ENCODE measurements at regions of chr4 and their contacts with region 1.

Region 1: DNA sequence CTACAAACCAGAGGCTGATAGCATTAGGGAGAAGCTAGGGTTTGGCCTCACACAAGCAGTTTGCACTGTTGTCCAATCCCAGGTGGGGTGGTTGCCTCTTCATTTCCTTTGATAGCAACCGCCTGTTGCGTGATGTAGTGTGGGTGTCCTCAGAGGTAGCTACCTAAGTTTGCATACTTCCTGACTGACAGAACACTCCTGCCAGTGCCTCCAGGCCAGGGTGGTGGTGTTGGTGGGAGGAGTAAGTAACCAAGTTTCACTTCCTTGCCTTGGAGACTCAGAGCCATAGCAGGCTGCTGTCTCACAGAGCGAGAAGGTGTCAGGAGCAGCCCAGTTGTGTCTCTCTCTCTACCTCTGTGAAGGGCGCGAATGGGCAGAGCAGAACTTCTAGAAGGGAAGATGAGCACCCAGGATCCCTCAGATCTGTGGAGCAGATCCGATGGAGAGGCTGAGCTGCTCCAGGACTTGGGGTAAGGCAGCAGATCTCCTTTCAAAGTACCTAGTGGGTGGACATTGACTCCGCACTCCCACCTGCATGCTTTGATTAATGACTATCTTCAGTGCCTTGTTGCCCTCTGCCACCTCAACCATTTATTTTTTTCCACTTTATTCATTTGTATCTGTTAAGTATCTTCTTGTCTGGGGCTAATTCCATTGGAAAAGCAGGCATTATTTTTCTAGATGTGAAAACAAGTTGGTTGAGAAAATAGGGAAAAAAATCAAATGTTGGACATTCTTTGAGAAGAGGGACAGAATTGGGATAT is at the start of gene DAPP1:
- DNase-seq: peak; percentile 96
- H3K4me3 ChIP-seq: peak within 1 kb of the TSS; percentile 80
- H3K27ac ChIP-seq: peak within 1 kb of the TSS; percentile 95
- H3K4me1 ChIP-seq: peaks cover 65% of the 10 kb centered on the region
- CTCF ChIP-seq: no peak
- total RNA-seq, gene DAPP1: 55.7 and 57.3 TPM in 2 replicates

Region 2: GRCh38 chr4:98928505-98929340 is 888.0 kb before region 1 on chr4 and contains the start of gene EIF4E:
- CTCF ChIA-PET with region 1: no interaction called
- POLR2A ChIA-PET with region 1: no interaction called
- intact Hi-C with region 1: loop called (anchors 2 kb)
- DNase-seq: peak; percentile 99
- H3K4me3 ChIP-seq: peak within 1 kb of the TSS; percentile 88
- H3K27ac ChIP-seq: peak within 1 kb of the TSS; percentile 83
- H3K4me1 ChIP-seq: peaks cover 32% of the 10 kb centered on the region
- CTCF ChIP-seq: peak; percentile 45
- total RNA-seq, gene EIF4E: 136 and 152 TPM in 2 replicates

Region 3: GRCh38 chr4:99563310-99564186 is 253.2 kb before region 1 on chr4 and contains the start of gene TRMT10A:
- CTCF ChIA-PET with region 1: no interaction called
- POLR2A ChIA-PET with region 1: interaction called, 13 read pairs
- intact Hi-C with region 1: no loop called
- DNase-seq: peak; percentile 96
- H3K4me3 ChIP-seq: peak within 1 kb of the TSS; percentile 80
- H3K27ac ChIP-seq: peak within 1 kb of the TSS; percentile 78
- H3K4me1 ChIP-seq: peaks cover 12% of the 10 kb centered on the region
- CTCF ChIP-seq: no peak
- total RNA-seq, gene TRMT10A: 7.9 and 13.3 TPM in 2 replicates

Region 4: GRCh38 chr4:99847362-99847976 is 30.7 kb after region 1 on chr4:
- CTCF ChIA-PET with region 1: no interaction called
- POLR2A ChIA-PET with region 1: interaction called, 30 read pairs
- intact Hi-C with region 1: loop called (anchors 2 kb)
- DNase-seq: peak; percentile 83
- H3K4me3 ChIP-seq: peak overlapping the region; percentile 40
- H3K27ac ChIP-seq: peak overlapping the region; percentile 75
- H3K4me1 ChIP-seq: peaks cover 49% of the 10 kb centered on the region
- CTCF ChIP-seq: no peak

Region 5: DNA sequence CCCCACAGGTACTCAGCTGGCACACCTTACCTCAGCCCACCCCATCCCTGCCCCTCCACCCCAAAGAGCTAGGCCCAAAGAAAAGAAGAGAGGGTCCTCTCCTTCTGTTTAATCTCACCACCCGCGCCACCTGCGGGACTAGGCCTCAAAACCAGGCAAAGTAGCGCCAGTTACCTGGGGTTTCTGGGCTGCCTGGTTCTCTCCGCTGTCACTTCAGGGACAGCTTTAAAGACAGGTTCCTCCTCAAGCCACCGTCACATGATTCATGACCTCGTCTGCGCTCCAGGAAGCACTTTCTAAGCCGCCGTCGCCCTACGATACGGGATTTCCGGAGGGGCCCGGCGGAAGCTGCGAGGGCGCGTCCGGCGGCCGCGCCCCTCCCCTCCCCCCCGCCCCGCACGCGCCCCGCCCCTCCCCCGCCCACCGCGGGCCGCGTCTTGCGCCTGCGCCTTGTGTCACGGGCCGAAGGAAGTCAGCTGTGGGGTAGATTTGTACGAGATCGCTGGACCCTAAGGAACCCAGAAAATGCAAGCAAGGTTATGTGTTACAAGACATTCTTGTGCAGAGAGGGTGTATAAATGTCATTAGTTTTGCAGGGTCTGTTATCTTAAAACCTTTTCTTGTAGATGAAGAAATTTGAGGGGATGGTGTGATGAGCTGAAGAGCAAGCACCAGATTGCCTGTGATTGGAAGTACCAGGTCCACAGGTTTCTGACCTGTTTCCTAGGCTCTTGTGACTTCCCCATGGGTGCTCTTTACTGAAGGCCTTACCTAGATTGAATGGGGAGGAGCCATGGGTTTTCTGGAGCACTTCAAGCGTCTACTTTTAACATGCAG is 77.7 kb after region 1 on chr4 and contains the start of gene LAMTOR3:
- CTCF ChIA-PET with region 1: no interaction called
- POLR2A ChIA-PET with region 1: interaction called, 12 read pairs
- intact Hi-C with region 1: no loop called
- DNase-seq: peak; percentile 95
- H3K4me3 ChIP-seq: peak within 1 kb of the TSS; percentile 92
- H3K27ac ChIP-seq: peak within 1 kb of the TSS; percentile 57
- H3K4me1 ChIP-seq: peaks cover 8% of the 10 kb centered on the region
- CTCF ChIP-seq: no peak
- total RNA-seq, gene LAMTOR3: 11.9 and 18.5 TPM in 2 replicates

Region 6: GRCh38 chr4:100022792-100023222 is 206.1 kb after region 1 on chr4:
- CTCF ChIA-PET with region 1: no interaction called
- POLR2A ChIA-PET with region 1: no interaction called
- intact Hi-C with region 1: no loop called
- DNase-seq: no peak
- H3K4me3 ChIP-seq: no peak overlapping the region
- H3K27ac ChIP-seq: no peak overlapping the region
- H3K4me1 ChIP-seq: no peaks in the 10 kb centered on the region
- CTCF ChIP-seq: no peak

Region 7: GRCh38 chr4:101347557-101348366 is 1531.0 kb after region 1 on chr4:
- CTCF ChIA-PET with region 1: no interaction called
- POLR2A ChIA-PET with region 1: no interaction called
- intact Hi-C with region 1: loop called (anchors 5 kb)
- DNase-seq: peak; percentile 95
- H3K4me3 ChIP-seq: peak overlapping the region; percentile 75
- H3K27ac ChIP-seq: peak overlapping the region; percentile 73
- H3K4me1 ChIP-seq: peaks cover 20% of the 10 kb centered on the region
- CTCF ChIP-seq: peak; percentile 40